Motor neuron (in vitro differentiated cells): ENCODE measurements at regions of chr22 and their contacts with region 1.

Region 1: GRCh38 chr22:40651563-40652501 is 15.3 kb upstream of the MRTFA start:
- ATAC-seq: peak; percentile 93 to 97 (median 96)
- H3K4me3 ChIP-seq: peak overlapping the region in 4 of 5 donors; percentile 30 to 54 (median 38)
- H3K27ac ChIP-seq: peak overlapping the region; percentile 79 to 94
- H3K4me1 ChIP-seq: peaks cover 6 to 8% of the 10 kb centered on the region in 2 donors

Region 2: DNA sequence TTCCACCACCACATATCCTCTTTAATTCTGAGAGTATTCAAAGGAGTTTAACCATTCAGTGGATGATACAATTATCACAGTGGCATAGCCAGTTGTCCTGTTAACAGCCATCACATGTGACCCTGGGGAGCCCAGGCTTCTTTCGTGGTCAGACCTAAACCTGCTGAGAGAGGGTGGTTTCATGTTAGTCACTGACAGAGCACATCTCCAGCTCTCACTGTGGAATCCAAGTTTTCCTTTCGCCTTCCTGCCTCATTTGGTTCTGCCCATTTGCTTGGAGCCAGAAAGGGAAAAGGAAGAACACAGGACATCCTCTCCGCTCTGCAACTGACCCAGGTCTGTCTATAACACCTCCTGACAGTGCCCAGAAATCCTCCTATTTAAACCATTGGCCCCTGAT is 87.9 kb after region 1 on chr22:
- in situ Hi-C with region 1: no loop called
- ATAC-seq: no peak
- H3K4me3 ChIP-seq: no peak overlapping the region
- H3K27ac ChIP-seq: no peak overlapping the region
- H3K4me1 ChIP-seq: peaks cover 3 to 7% of the 10 kb centered on the region in 2 donors

Region 3: DNA sequence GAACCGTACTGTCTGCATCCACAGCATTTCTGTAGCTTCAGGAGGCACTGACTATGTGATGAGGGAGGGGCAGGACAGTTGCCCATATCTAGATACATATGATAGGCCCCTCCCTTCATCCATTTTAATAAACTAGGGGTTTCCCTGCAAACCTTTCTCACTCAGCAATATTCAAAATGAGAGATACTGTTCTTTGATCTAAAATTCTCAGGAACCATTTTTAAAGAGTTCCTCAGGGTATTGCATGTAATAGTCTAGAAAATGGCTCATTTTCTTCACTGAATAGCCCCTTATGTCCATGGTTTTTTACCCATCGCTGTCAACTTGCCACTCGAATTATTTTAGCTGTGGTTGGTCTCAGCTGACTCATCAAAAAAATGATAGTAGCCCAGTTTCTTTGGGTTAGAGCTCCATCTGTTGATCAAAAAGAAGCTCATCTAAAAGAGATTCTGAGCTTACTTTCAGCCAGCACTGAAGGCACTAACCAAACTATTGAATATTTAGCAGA is 247.1 kb after region 1 on chr22:
- in situ Hi-C with region 1: loop called in 1 of 9 experiments (anchors 25 kb)
- ATAC-seq: peak in 4 of 8 experiments; percentile 25 to 93 (median 90)
- H3K4me3 ChIP-seq: no peak overlapping the region
- H3K27ac ChIP-seq: no peak overlapping the region
- H3K4me1 ChIP-seq: no peaks in the 10 kb centered on the region